ENCODE measurements at regions of chr14 and their contacts with region 1.

Region 1: DNA sequence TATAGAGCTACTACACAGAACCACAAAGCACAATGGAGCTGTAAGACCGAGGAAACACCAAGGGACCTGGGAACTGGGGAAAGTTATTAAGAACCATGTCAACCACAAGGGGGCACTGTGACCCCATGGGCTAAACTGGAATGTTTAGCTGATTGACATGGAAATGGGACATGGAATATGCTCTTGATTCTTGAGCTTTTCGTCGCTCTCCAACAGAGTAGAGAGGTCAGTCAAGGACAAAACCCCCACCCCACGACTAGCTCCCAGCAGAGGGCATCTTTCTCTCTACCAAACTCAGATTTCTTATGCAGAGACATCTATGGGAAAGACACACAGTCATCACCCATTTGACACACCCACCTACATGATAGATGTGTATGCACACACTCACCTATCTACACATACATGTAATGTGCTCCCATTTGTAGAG is 10.1 kb downstream of the NDRG2 start:
- H3K4me3 ChIP-seq: no peak overlapping the region
- H3K27ac ChIP-seq: no peak overlapping the region
- H3K4me1 ChIP-seq: no peaks in the 10 kb centered on the region
- CTCF ChIP-seq: peak; percentile 91

Region 2: GRCh38 chr14:20799892-20800544 is 214.8 kb before region 1 on chr14:
- CTCF ChIA-PET with region 1: no interaction called
- POLR2A ChIA-PET with region 1: no interaction called
- H3K4me3 ChIP-seq: no peak overlapping the region
- H3K27ac ChIP-seq: no peak overlapping the region
- H3K4me1 ChIP-seq: no peaks in the 10 kb centered on the region
- CTCF ChIP-seq: no peak

Region 3: GRCh38 chr14:20998664-20999366 is 16.0 kb before region 1 on chr14 and contains the start of gene SLC39A2:
- CTCF ChIA-PET with region 1: interaction called, 43 read pairs
- POLR2A ChIA-PET with region 1: interaction called, 3 read pairs
- H3K4me3 ChIP-seq: no peak within 1 kb of the TSS
- H3K27ac ChIP-seq: no peak within 1 kb of the TSS
- H3K4me1 ChIP-seq: no peaks in the 10 kb centered on the region
- CTCF ChIP-seq: no peak

Region 4: GRCh38 chr14:21025371-21026151 is 10.8 kb after region 1 on chr14:
- CTCF ChIA-PET with region 1: interaction called, 35 read pairs
- POLR2A ChIA-PET with region 1: interaction called, 5 read pairs
- H3K4me3 ChIP-seq: peak overlapping the region; percentile 69
- H3K27ac ChIP-seq: no peak overlapping the region
- H3K4me1 ChIP-seq: peaks cover 10% of the 10 kb centered on the region; the same call in 1 of the 2 replicates
- CTCF ChIP-seq: no peak

Region 5: GRCh38 chr14:21039585-21040369 is 25.0 kb after region 1 on chr14:
- CTCF ChIA-PET with region 1: interaction called, 206 read pairs
- POLR2A ChIA-PET with region 1: interaction called, 15 read pairs
- H3K4me3 ChIP-seq: no peak overlapping the region
- H3K27ac ChIP-seq: no peak overlapping the region
- H3K4me1 ChIP-seq: no peaks in the 10 kb centered on the region
- CTCF ChIP-seq: peak; percentile 67

Region 6: GRCh38 chr14:21063479-21063878 is 48.7 kb after region 1 on chr14:
- CTCF ChIA-PET with region 1: interaction called, 49 read pairs
- POLR2A ChIA-PET with region 1: interaction called, 3 read pairs
- H3K4me3 ChIP-seq: no peak overlapping the region
- H3K27ac ChIP-seq: no peak overlapping the region
- H3K4me1 ChIP-seq: no peaks in the 10 kb centered on the region; the same call in 1 of the 2 replicates
- CTCF ChIP-seq: no peak

Region 7: GRCh38 chr14:21092273-21093011 is 77.7 kb after region 1 on chr14:
- CTCF ChIA-PET with region 1: interaction called, 136 read pairs
- POLR2A ChIA-PET with region 1: interaction called, 6 read pairs
- H3K4me3 ChIP-seq: no peak overlapping the region
- H3K27ac ChIP-seq: no peak overlapping the region
- H3K4me1 ChIP-seq: peaks cover 8% of the 10 kb centered on the region; the same call in 1 of the 2 replicates
- CTCF ChIP-seq: peak; percentile 98

Region 8: DNA sequence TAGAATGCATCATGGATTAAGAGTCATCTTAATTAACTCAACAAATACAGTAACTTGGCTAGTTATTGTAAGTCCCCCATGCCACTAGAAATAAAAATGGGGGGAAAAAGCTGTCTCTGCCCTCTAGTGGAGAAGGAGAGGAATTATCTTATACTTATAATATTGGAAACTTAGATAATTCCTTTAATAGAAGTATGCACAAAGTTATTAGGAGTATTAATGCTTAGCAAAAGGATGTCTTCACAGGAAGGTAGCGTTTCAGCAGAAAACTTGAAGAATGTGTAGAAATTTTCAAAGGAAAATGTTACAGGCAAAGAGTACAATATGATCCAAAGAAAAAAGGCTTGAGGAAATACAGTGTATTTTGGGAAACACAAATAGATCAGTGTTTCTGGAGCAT is 121.2 kb after region 1 on chr14:
- CTCF ChIA-PET with region 1: interaction called, 21 read pairs
- POLR2A ChIA-PET with region 1: no interaction called
- H3K4me3 ChIP-seq: no peak overlapping the region
- H3K27ac ChIP-seq: no peak overlapping the region
- H3K4me1 ChIP-seq: no peaks in the 10 kb centered on the region
- CTCF ChIP-seq: no peak

Region 9: GRCh38 chr14:21185491-21185890 is 170.7 kb after region 1 on chr14:
- CTCF ChIA-PET with region 1: no interaction called
- POLR2A ChIA-PET with region 1: no interaction called
- H3K4me3 ChIP-seq: no peak overlapping the region
- H3K27ac ChIP-seq: no peak overlapping the region
- H3K4me1 ChIP-seq: no peaks in the 10 kb centered on the region
- CTCF ChIP-seq: no peak